ENCODE measurements at regions of chr5 and their contacts with region 1.

Region 1: GRCh38 chr5:60586307-60586901 is 113.6 kb downstream of the DEPDC1B start:
- DNase-seq: no peak
- ATAC-seq: no peak
- H3K4me3 Mint-ChIP-seq: no peak overlapping the region
- H3K27ac Mint-ChIP-seq: no peak overlapping the region
- H3K4me1 Mint-ChIP-seq: peaks cover 18% of the 10 kb centered on the region
- H3K27me3 Mint-ChIP-seq: no peaks in the 10 kb centered on the region
- CTCF ChIP-seq: no peak

Region 2: DNA sequence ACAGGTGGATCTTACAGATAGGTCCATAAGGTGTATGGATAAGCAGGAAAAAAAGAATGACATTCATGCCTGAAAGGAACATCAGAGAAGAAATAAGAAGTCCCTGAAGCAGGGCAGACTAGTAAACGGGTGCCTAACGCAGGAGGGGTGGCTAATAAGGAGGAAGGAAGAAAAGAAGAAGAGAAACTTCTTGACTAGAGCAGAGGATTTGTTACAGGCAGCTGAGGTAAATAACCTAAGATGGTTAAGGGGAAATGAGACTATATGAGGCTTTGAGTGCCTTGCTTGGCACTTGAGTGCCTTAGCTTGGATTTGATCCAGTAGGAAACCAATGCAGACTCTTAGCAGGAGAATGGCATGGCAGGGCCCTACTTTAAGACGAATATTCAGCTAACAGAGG is 379.4 kb before region 1 on chr5:
- CTCF ChIA-PET with region 1: no interaction called
- POLR2A ChIA-PET with region 1: no interaction called
- intact Hi-C with region 1: loop called (anchors 10 kb)
- DNase-seq: no peak
- ATAC-seq: peak; percentile 95
- H3K4me3 Mint-ChIP-seq: peak overlapping the region; percentile 52
- H3K27ac Mint-ChIP-seq: peak overlapping the region; percentile 67
- H3K4me1 Mint-ChIP-seq: peaks cover 23% of the 10 kb centered on the region
- H3K27me3 Mint-ChIP-seq: no peaks in the 10 kb centered on the region
- CTCF ChIP-seq: no peak

Region 3: DNA sequence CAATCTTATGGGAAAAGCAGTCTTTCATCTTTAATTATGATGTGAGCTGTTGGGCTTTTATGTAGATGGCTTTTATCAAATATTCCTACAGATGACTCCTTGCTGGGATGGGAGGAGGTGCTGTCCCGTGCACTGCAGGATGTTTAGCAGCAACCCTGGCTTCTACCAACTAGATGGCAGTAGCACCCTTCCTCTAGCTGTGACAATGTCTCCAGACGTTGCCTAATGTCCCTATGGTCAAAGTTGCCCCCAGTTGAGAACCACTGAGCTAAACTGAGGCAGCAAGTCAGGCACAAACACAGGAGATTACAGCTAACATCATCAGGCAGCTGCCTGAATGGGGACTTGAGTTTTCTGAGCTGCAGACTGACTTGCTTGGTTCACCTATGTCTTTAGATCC is 291.0 kb before region 1 on chr5:
- CTCF ChIA-PET with region 1: interaction called, 19 read pairs
- POLR2A ChIA-PET with region 1: no interaction called
- intact Hi-C with region 1: loop called (anchors 1 kb)
- DNase-seq: no peak
- ATAC-seq: no peak
- H3K4me3 Mint-ChIP-seq: no peak overlapping the region
- H3K27ac Mint-ChIP-seq: no peak overlapping the region
- H3K4me1 Mint-ChIP-seq: no peaks in the 10 kb centered on the region
- H3K27me3 Mint-ChIP-seq: no peaks in the 10 kb centered on the region
- CTCF ChIP-seq: no peak

Region 4: DNA sequence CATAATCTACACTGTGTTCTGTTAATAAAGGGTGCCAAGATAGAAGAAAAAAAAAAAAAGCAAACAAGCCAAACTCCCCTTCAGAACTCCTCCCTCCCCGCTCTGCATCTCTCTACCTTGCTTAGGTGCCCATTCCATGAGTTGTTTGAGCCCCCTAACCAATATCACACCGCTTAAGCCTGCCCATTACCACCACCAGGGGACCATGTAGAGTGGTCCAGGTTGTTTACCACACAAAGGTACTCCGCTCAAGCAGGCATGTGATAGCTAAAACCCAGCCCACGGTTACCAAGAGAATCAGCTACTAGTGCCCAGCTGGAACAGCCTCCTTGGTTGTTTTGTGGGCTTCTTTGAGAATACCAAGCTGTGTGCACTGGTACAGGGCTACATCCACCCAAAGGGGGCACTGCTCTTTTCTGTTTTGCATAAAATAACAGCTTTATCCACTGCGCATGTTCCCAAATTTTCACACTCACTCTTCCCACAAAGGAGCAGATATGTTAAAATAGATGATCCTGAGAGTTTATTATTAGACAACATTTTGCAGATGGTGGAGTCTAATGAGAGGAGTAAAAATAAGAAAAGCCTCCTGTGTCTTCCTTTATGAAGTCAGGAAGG is 190.6 kb before region 1 on chr5:
- CTCF ChIA-PET with region 1: no interaction called
- POLR2A ChIA-PET with region 1: no interaction called
- intact Hi-C with region 1: loop called (anchors 10 kb)
- DNase-seq: no peak
- ATAC-seq: no peak
- H3K4me3 Mint-ChIP-seq: no peak overlapping the region
- H3K27ac Mint-ChIP-seq: no peak overlapping the region
- H3K4me1 Mint-ChIP-seq: peaks cover 13% of the 10 kb centered on the region
- H3K27me3 Mint-ChIP-seq: no peaks in the 10 kb centered on the region
- CTCF ChIP-seq: no peak

Region 5: DNA sequence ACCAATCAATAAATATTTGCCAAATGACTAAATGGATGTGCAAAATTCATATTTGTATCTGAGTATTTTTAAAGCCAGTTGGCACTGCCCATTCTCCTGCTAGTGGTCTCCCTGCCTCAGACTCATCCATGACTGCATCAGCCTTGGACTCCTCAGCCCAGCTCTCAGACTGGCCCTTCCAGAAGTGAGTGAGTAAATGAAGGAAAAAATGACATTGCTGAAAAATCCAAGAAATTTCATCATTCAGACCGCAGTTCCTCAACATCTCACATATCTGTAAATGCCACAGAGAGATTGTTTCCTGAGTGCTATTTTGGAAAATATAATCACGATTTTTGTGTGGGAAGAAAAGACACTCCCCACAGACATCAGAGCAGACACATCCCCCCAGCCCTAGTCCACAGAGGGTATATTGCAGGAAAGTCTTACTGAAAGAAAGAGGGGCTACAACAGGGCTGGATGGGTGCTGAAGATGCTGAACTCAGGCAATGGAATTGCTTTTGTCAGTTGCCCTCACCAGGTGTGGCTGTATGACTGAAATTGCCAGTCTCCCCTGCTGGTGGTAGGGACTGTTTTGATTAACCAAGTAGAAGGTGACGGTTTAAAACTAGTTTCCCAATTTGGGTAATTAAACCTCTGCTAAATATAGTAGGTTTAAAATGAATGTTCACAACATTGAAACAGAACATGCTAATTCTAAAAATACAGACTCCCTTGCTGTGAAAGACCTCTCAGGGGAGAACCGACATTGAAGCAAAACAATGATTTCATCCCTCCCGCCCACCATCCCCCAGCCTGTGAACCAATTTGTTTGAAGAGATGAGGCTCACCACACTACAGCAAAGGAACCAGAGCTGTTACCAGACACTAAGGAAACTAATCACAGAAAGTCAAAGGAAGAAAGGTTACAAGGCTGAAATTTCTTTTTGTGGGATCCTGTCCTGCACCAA is 45.3 kb before region 1 on chr5:
- CTCF ChIA-PET with region 1: no interaction called
- POLR2A ChIA-PET with region 1: no interaction called
- intact Hi-C with region 1: loop called (anchors 1 kb)
- DNase-seq: no peak
- ATAC-seq: peak; percentile 87
- H3K4me3 Mint-ChIP-seq: peak overlapping the region; percentile 60
- H3K27ac Mint-ChIP-seq: peak overlapping the region; percentile 70
- H3K4me1 Mint-ChIP-seq: peaks cover 61% of the 10 kb centered on the region
- H3K27me3 Mint-ChIP-seq: no peaks in the 10 kb centered on the region
- CTCF ChIP-seq: no peak